PC-9 (cell line): ENCODE measurements at regions of chr1 and their contacts with region 1.

Region 1: DNA sequence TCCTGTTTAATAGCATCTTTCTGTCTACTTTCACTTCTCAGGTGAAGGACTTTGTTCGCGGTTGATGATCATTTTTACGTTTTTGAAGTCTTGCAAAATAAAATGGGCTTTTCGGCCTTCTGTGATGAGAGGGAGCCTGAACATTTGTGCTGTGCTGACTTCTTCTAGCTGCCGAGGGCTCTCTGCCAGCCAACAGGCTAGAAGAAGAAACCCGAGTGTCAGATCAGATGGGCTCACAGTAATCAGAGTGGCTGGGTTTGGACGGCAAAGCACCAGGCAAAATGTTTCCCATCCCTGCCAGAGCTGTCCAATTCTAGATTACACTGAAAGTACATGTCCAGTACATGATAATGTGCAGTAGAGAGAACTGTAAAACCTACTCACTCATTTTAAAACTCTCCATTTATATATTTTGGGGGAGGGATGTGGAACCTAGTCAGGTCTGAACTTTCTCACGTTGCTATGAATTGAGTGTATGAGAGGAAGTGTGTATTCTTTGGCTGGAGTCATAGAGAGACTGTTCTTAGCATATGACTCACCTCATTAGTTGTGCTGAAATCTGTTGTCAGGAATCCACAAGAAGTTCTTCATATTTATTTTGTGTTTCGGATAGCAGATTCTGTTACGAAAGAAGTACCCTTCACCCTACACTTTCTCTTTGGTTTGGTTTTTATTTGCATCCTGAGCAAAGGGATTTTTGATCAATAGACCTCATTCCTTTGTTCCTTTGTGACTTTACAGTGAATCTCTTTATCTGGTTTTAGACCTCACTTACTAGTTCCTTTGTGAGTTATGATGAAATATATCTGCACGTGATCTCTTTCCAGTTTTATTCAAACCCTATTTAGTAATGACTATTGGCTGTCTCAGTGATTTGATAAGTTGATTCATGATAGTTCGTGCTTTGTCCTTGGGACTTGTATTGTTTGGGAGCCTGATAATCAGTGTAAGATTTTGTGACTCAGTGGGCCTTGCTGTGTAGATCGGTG is 4.8 kb downstream of the ATP1A1 start:
- DNase-seq: peak in 1 of 2 experiments; percentile 97
- H3K4me3 ChIP-seq: peak overlapping the region; percentile 75; the same call in 1 of the 2 replicates
- H3K27ac ChIP-seq: peak overlapping the region; percentile 83
- H3K4me1 ChIP-seq: peaks cover 58% of the 10 kb centered on the region
- H3K27me3 ChIP-seq: no peaks in the 10 kb centered on the region
- CTCF ChIP-seq: no peak

Region 2: GRCh38 chr1:116168277-116169097 is 209.3 kb before region 1 on chr1:
- CTCF ChIA-PET with region 1: no interaction called
- POLR2A ChIA-PET with region 1: interaction called, 10 read pairs
- intact Hi-C with region 1: loop called (anchors 5 kb)
- DNase-seq: peak; percentile 53 to 76
- H3K4me3 ChIP-seq: peak overlapping the region; percentile 56
- H3K27ac ChIP-seq: no peak overlapping the region
- H3K4me1 ChIP-seq: peaks cover 13% of the 10 kb centered on the region
- H3K27me3 ChIP-seq: no peaks in the 10 kb centered on the region
- CTCF ChIP-seq: peak; percentile 97

Region 3: GRCh38 chr1:116268204-116268603 is 109.6 kb before region 1 on chr1:
- CTCF ChIA-PET with region 1: no interaction called
- POLR2A ChIA-PET with region 1: no interaction called
- intact Hi-C with region 1: loop called (anchors 5 kb)
- DNase-seq: peak; percentile 77 to 91
- H3K4me3 ChIP-seq: no peak overlapping the region
- H3K27ac ChIP-seq: peak overlapping the region; percentile 63
- H3K4me1 ChIP-seq: peaks cover 14% of the 10 kb centered on the region
- H3K27me3 ChIP-seq: no peaks in the 10 kb centered on the region
- CTCF ChIP-seq: no peak

Region 4: DNA sequence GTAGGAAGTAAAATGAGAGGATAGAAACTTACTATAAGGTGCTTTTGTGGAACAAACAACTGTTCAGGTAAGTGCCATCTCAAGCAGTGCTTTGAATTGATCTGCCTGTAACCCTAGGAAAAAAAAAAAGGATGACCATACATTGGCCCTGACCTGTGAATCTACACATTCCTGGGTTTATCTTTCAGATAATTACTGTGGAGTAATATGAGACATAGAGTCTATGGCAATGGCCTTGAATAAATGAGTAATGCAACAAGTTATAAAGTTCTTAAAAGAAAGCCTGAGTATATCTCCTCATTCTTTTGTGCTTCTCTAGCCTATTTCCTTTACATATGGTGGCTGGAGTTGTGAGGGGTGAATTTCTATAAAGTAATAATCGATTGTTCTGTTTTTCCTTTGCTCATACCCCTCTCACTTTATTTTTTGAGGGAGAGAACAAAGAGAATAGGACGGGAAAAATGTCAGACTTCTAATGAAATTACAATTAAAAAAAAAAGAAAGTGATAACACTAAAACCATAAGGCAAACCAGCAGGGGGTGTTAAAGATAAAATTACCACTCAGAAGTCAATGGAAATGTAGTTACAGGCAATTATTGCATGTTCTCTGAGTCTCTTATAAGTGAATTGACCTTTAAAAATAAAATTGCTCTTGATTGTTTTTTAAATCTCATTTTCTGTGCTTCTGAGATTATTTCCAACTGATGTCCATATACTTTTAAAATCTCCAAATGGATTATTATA is 17.2 kb before region 1 on chr1:
- CTCF ChIA-PET with region 1: no interaction called
- POLR2A ChIA-PET with region 1: interaction called, 10 read pairs
- intact Hi-C with region 1: no loop called
- DNase-seq: peak in 1 of 2 experiments; percentile 65
- H3K4me3 ChIP-seq: no peak overlapping the region
- H3K27ac ChIP-seq: peak overlapping the region; percentile 24
- H3K4me1 ChIP-seq: peaks cover 56% of the 10 kb centered on the region
- H3K27me3 ChIP-seq: no peaks in the 10 kb centered on the region
- CTCF ChIP-seq: peak; percentile 65

Region 5: GRCh38 chr1:116453906-116454305 is 76.1 kb after region 1 on chr1:
- CTCF ChIA-PET with region 1: no interaction called
- POLR2A ChIA-PET with region 1: no interaction called
- intact Hi-C with region 1: loop called (anchors 2 kb)
- DNase-seq: peak; percentile 55 to 79
- H3K4me3 ChIP-seq: peak overlapping the region; percentile 27; the same call in 1 of the 2 replicates
- H3K27ac ChIP-seq: peak overlapping the region; percentile 62
- H3K4me1 ChIP-seq: peaks cover 62% of the 10 kb centered on the region
- H3K27me3 ChIP-seq: no peaks in the 10 kb centered on the region
- CTCF ChIP-seq: no peak

Region 6: DNA sequence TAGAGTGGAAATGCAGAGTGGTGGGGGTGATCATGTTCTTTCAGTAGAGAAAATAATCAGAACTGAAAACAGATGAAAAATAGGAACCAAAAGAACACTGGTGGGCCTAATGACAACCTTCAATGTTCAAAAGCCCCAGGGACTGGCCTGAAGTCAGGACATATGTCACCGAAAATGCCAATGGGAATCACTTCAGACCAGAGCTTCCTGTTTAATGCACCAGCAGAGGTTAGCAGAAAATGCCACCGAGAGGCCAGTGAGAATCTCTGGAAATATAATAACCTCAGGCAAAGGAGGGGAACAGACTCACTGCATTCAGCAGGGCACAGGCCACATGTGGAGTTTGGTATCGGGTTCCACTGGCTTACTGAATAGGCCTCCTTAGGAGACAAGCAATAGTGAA is 208.9 kb after region 1 on chr1:
- CTCF ChIA-PET with region 1: no interaction called
- POLR2A ChIA-PET with region 1: no interaction called
- intact Hi-C with region 1: no loop called
- DNase-seq: peak; percentile 15 to 80
- H3K4me3 ChIP-seq: no peak overlapping the region
- H3K27ac ChIP-seq: peak overlapping the region; percentile 54
- H3K4me1 ChIP-seq: peaks cover 41% of the 10 kb centered on the region
- H3K27me3 ChIP-seq: no peaks in the 10 kb centered on the region
- CTCF ChIP-seq: no peak